T-cell (primary cell): ENCODE measurements at regions of chr11 and their contacts with region 1.

Region 1: GRCh38 chr11:102317099-102317767 is at the start of gene BIRC3:
- DNase-seq: peak; percentile 70 to 98 (median 92)
- ATAC-seq: peak; percentile 87 to 91 (median 90)
- H3K4me3 ChIP-seq: peak within 1 kb of the TSS; percentile 63 to 75
- H3K4me3 Mint-ChIP-seq: peak within 1 kb of the TSS; percentile 89 to 95 (median 93)
- H3K27ac ChIP-seq: peak within 1 kb of the TSS; percentile 95
- H3K27ac Mint-ChIP-seq: peak within 1 kb of the TSS; percentile 97 to 98
- H3K4me1 ChIP-seq: peaks cover 21 to 49% of the 10 kb centered on the region in 2 experiments
- H3K4me1 Mint-ChIP-seq: peaks cover 66 to 87% (median 77%) of the 10 kb centered on the region in 3 donors
- H3K27me3 ChIP-seq: no peaks in the 10 kb centered on the region
- H3K27me3 Mint-ChIP-seq: no peaks in the 10 kb centered on the region
- total RNA-seq, gene BIRC3: 82.6 to 114 (median 96.0) TPM

Region 2: DNA sequence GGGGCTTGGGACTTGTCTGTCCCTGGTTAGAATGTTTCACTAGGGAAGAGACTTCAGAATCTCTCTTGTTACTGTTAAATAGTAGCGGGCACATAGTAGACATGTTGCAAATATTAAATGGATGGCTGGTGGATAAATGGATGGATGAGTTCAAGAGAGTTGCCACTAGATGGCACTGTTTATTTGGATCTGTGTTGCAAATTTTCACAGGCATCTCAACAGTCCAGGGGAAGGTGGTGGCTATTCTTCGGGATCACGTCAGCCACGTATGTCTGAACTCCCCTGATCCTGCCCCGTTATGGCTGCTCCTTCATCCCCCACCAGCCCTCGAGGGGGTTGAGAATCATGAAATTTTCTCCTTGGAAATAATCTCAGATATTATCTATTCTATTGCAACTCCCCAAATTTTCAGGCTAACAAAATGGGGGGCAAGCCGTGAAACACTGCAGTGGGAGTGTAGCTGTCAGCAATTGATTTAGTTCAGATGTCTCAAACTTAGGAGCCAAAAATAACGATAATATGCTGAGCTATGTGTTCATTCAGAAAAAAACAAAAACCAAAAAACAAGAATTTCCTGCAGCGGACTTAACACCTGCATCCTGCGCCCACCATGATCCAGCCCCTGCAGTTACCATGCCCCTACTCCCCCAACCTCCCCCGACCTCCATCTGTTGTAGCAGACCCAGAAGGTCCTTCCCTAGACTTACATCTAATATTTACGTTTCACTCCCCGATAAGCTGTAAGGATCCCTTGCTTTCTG is 29.1 kb before region 1 on chr11:
- CTCF ChIA-PET with region 1: interaction called, 26 to 66 read pairs
- POLR2A ChIA-PET with region 1: interaction called, 4 to 11 read pairs
- DNase-seq: peak in 11 of 35 experiments; percentile 10 to 85 (median 23)
- ATAC-seq: peak; percentile 76 to 87 (median 81)
- H3K4me3 ChIP-seq: peak overlapping the region in 1 of 2 donors; percentile 39
- H3K4me3 Mint-ChIP-seq: peak overlapping the region in 1 of 3 donors; percentile 55
- H3K27ac ChIP-seq: no peak overlapping the region
- H3K27ac Mint-ChIP-seq: no peak overlapping the region
- H3K4me1 ChIP-seq: peaks cover 2 to 9% of the 10 kb centered on the region in 2 experiments
- H3K4me1 Mint-ChIP-seq: peaks cover 12 to 34% (median 18%) of the 10 kb centered on the region in 3 donors
- H3K27me3 ChIP-seq: no peaks in the 10 kb centered on the region
- H3K27me3 Mint-ChIP-seq: no peaks in the 10 kb centered on the region

Region 3: GRCh38 chr11:102306048-102306585 is 11.1 kb before region 1 on chr11:
- CTCF ChIA-PET with region 1: interaction called, 4 to 11 read pairs
- POLR2A ChIA-PET with region 1: interaction called, 4 to 11 read pairs
- DNase-seq: peak in 3 of 35 experiments; percentile 22 to 64 (median 49)
- ATAC-seq: peak; percentile 44 to 66 (median 60)
- H3K4me3 ChIP-seq: no peak overlapping the region
- H3K4me3 Mint-ChIP-seq: peak overlapping the region; percentile 37 to 60 (median 49)
- H3K27ac ChIP-seq: peak overlapping the region; percentile 90
- H3K27ac Mint-ChIP-seq: peak overlapping the region; percentile 95 to 97
- H3K4me1 ChIP-seq: peaks cover 30 to 41% of the 10 kb centered on the region in 2 experiments
- H3K4me1 Mint-ChIP-seq: peaks cover 61 to 78% (median 66%) of the 10 kb centered on the region in 3 donors
- H3K27me3 ChIP-seq: no peaks in the 10 kb centered on the region
- H3K27me3 Mint-ChIP-seq: no peaks in the 10 kb centered on the region